Heart right ventricle (tissue), 16 donors: ENCODE measurements at regions of chr21 and their contacts with region 1.

Region 1: GRCh38 chr21:44299458-44300261 is at the start of gene PFKL:
- DNase-seq: peak; percentile 68 to 79
- ATAC-seq: peak; percentile 45 to 80 (median 53)
- H3K4me3 ChIP-seq: peak within 1 kb of the TSS; percentile 56 to 92 (median 78)
- H3K27ac ChIP-seq: peak within 1 kb of the TSS; percentile 83 to 98 (median 94)
- H3K4me1 ChIP-seq: peaks cover 42 to 73% (median 63%) of the 10 kb centered on the region in 9 donors
- H3K27me3 ChIP-seq: no peaks in the 10 kb centered on the region
- CTCF ChIP-seq: no peak
- total RNA-seq, gene PFKL: 34.7 to 84.4 (median 43.8) TPM

Region 2: DNA sequence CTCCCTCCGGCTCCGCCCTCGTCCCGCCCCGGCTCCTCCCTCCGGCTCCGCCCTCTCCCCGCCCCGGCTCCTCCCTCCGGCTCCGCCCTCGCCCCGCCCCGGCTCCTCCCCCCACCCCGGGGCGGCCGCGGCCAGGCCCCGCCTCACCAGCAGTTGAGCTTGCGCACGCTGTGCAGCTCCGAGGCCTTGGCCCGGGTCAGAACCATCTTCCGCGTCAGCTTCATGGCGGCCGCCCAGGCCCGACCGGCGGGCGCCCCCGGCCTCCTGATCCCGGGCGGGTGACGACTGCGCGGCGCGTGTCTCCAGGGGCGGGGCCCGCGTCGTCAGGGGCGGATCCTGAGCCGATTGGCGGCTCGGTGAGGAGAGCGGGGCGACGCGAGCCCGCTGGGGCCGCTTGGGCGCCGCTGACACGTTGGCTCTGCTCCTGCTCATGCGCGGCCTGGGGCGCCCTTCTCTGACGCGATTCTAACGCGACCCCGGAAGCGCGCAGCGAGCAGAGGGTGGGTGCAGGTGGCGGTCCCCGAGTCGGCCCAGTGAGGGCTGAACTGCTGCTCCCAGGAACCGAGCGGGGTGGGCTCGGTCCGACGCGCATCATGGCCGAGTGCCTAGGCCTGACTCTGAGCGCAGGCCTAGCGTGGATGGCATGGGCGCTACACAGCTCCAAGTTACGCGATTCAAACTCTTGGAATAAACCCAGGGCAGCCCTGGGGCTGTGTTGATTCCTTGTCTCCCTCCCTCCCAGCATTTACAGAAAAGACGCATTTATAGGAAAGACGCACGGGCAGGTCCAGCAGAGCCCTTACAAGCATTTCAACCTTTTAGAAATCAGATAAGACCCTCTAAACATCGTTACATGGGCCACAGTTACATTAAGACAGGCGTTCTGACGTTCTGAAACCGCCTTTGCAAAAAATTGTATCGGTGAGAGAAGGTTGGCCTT is 39.6 kb after region 1 on chr21 and contains the start of gene CFAP410:
- intact Hi-C with region 1: loop called in 3 of 10 experiments (anchors 2 to 5 kb)
- DNase-seq: peak; percentile 92 to 96
- ATAC-seq: peak; percentile 94 to 95 (median 94)
- H3K4me3 ChIP-seq: peak within 1 kb of the TSS; percentile 53 to 97 (median 86)
- H3K27ac ChIP-seq: peak within 1 kb of the TSS; percentile 91 to 99 (median 97)
- H3K4me1 ChIP-seq: peaks cover 5 to 22% (median 18%) of the 10 kb centered on the region in 9 donors
- H3K27me3 ChIP-seq: no peaks in the 10 kb centered on the region
- CTCF ChIP-seq: no peak
- total RNA-seq, gene CFAP410: 10.9 to 15.8 (median 13.3) TPM

Region 3: DNA sequence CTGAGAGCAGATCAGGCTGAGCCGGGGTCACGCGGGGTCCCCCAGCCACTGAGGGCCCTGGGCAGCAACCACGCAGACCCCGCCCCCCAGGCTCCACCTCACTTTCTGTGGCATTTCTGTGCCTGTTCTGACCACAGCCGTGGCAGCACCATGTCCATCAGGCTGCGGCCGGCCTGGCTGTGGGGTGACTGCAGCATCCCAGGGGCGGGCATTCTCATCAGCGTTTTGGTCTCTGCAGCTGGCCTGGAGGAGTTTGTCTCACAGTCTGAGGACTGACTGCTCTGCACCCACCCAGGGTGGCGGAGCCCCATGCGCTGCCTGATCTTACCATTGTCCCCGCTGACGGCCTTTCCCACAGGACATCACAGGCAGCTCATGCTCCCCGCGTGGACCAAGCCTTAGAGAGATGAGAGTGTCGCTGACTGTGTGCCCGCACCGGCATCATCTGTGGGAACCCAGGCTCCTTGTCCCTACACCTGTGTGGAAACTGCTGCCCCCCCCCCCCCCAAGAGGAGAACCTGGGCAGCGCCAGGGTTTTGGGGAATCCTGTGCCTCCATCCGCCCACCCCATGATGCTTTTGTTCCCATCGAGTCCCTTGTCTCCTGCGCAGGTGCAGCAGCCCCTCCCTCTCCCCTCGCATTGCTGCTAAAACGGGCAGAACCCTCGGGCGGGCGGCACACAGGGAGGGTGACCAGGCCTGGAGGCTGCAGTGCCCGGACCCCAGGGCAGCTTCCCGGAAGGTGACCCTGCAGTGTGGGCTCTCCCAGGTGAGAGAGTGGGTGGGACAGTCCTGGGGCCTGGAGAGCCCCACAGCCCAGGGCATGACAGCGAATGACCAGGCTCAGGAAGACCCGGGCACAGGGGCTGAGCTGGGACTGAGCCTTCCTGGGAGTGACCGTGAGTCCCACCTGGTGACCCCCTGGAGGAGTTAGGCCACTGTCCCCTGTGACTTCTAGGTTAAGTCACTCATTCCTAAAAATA is 238.6 kb after region 1 on chr21:
- intact Hi-C with region 1: no loop called
- DNase-seq: no peak
- ATAC-seq: peak in 1 of 8 donors; percentile 26
- H3K4me3 ChIP-seq: no peak overlapping the region
- H3K27ac ChIP-seq: no peak overlapping the region
- H3K4me1 ChIP-seq: no peaks in the 10 kb centered on the region
- H3K27me3 ChIP-seq: peaks cover 0 to 32% (median 0%) of the 10 kb centered on the region in 7 donors
- CTCF ChIP-seq: no peak